ENCODE measurements at regions of chr7 and their contacts with region 1.

Region 1: GRCh38 chr7:2451171-2452073 is 24.8 kb downstream of the GRIFIN start:
- DNase-seq: peak; percentile 12
- ATAC-seq: peak; percentile 98
- H3K4me3 ChIP-seq: peak overlapping the region; percentile 6 to 51
- H3K27ac ChIP-seq: peak overlapping the region; percentile 60
- H3K4me1 ChIP-seq: peaks cover 18% of the 10 kb centered on the region
- H3K27me3 ChIP-seq: no peaks in the 10 kb centered on the region
- CTCF ChIP-seq: peak; percentile 99

Region 2: GRCh38 chr7:2354186-2354938 is 97.1 kb before region 1 on chr7 and contains the start of gene EIF3B:
- CTCF ChIA-PET with region 1: no interaction called
- POLR2A ChIA-PET with region 1: interaction called, 12 read pairs
- in situ Hi-C with region 1: no loop called
- intact Hi-C with region 1: no loop called
- DNase-seq: peak; percentile 94
- ATAC-seq: peak; percentile 92
- H3K4me3 ChIP-seq: peak within 1 kb of the TSS; percentile 64 to 98
- H3K27ac ChIP-seq: peak within 1 kb of the TSS; percentile 99
- H3K4me1 ChIP-seq: peaks cover 13% of the 10 kb centered on the region
- H3K27me3 ChIP-seq: no peaks in the 10 kb centered on the region
- CTCF ChIP-seq: no peak
- total RNA-seq, gene EIF3B: 432 TPM

Region 3: DNA sequence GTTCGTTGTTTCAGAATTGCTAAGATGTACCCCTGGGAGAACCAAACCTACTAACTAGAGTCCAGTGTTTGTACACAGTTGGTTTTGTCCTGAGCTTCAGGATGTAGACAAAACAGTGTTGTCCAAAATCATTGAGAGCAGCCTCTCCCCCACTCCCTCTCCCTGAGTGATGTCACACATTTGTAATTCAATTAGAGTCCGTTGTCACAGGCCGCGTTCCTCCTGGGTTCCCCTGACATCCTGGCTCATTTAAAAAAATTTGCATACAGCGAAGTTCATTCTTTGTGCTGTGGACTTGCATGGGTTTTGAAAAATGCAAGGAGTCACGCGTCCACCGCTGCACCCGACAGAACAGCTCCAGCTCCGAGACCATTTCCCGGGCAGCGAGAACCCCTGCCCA is 14.5 kb after region 1 on chr7:
- CTCF ChIA-PET with region 1: interaction called, 52 read pairs
- POLR2A ChIA-PET with region 1: interaction called, 17 read pairs
- in situ Hi-C with region 1: no loop called
- intact Hi-C with region 1: no loop called
- DNase-seq: no peak
- ATAC-seq: no peak
- H3K4me3 ChIP-seq: no peak overlapping the region
- H3K27ac ChIP-seq: no peak overlapping the region
- H3K4me1 ChIP-seq: no peaks in the 10 kb centered on the region; the same call in 1 of the 2 replicates
- H3K27me3 ChIP-seq: no peaks in the 10 kb centered on the region
- CTCF ChIP-seq: no peak

Region 4: DNA sequence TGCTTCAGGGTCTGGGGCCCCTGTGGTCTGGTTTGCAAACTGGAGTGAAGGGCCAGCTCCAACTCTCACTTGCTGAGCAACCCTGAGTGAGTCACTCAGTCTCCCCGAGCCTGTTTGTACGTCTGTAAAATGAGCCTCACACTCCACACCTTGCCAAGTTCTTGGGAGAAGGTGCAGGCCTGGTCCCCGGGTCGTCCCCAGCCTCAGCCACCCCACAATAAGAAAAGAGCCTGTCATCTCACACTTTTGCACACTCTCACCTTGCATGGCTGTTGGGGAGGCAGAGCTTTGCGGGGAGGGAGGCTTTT is 19.6 kb after region 1 on chr7:
- CTCF ChIA-PET with region 1: interaction called, 52 read pairs
- POLR2A ChIA-PET with region 1: interaction called, 4 read pairs
- in situ Hi-C with region 1: no loop called
- intact Hi-C with region 1: no loop called
- DNase-seq: no peak
- ATAC-seq: peak; percentile 57
- H3K4me3 ChIP-seq: no peak overlapping the region
- H3K27ac ChIP-seq: no peak overlapping the region
- H3K4me1 ChIP-seq: peaks cover 7% of the 10 kb centered on the region; the same call in 1 of the 2 replicates
- H3K27me3 ChIP-seq: no peaks in the 10 kb centered on the region
- CTCF ChIP-seq: no peak

Region 5: DNA sequence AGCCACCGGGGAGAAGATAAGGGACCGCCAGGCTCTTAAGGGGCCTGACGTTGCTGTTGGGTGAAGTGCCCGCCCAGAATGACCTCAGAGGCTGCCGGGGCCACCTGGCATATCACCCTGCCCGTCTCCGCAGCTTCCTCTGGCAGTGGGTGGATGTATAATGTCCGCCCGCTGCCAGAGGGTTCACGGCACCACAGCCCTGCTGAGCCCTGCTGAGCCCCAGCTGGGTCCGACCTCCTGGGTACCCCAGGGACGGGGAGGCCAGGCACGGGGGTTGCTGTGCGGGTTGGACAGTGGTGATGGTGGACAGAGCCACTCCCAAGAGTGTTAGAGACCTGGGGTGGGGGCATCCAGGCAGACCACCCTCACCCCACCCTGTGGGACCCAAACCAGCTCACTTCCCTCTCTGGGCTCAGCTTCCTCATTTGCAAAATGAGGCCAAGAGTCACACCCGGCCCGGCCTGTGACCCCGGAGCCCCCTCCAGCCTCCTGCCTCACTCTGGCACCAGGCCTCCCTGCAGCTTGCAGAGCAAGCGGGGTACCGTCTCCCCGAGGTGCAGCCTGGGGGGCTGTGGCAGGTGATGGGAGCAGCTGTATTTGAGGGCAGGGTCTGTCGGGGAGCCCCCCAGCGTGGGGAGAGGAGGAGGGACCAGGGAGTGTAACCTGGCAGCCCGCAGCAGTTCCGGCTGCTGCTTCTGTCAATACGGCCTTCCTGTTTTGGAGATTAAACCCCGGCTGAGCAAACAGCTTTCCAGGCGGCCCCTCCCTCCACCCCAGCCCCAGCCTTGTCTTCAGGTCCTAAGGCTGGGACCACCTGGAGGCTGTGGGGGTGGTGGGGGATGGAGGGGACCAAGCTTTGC is 59.7 kb after region 1 on chr7:
- CTCF ChIA-PET with region 1: no interaction called
- POLR2A ChIA-PET with region 1: interaction called, 11 read pairs
- in situ Hi-C with region 1: no loop called
- intact Hi-C with region 1: no loop called
- DNase-seq: no peak
- ATAC-seq: peak; percentile 36
- H3K4me3 ChIP-seq: no peak overlapping the region
- H3K27ac ChIP-seq: peak overlapping the region; percentile 62
- H3K4me1 ChIP-seq: peaks cover 39% of the 10 kb centered on the region
- H3K27me3 ChIP-seq: no peaks in the 10 kb centered on the region
- CTCF ChIP-seq: no peak

Region 6: DNA sequence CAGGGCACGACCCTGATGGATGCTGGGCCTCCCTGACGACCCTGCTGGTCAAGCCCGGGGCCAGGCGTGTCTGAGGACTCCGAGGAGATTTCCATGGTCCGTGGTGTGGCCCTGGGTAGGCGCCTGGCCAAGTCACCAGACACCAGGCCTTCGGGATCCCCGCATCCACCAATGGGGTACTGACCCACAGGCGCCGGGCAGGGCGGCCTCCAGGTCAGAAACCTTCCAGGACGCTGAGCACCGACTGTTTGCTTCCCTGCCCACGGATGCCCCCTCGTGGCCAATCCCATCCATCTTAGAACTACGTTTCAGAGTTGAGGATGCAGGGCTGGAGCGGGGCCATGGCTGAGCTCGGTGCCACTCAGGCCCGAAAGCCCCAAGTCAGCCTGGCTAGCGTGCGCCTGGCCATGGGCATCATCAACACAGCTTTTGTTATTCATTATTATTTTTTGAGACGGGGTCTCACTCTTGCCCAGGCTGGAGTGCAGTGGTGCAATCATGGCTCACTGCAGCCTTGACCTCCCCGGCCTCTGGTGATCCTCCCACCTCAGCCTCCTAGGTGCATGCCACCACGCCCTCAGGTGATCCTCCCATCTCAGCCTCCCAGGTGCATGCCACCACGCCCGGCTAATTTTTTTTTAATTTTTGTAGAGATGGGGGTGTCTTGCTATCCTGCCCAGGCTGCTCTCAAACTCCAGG is 229.5 kb after region 1 on chr7:
- CTCF ChIA-PET with region 1: interaction called, 6 read pairs
- POLR2A ChIA-PET with region 1: no interaction called
- in situ Hi-C with region 1: no loop called
- intact Hi-C with region 1: loop called (anchors 10 kb)
- DNase-seq: peak; percentile 27
- ATAC-seq: peak; percentile 89
- H3K4me3 ChIP-seq: no peak overlapping the region
- H3K27ac ChIP-seq: no peak overlapping the region
- H3K4me1 ChIP-seq: no peaks in the 10 kb centered on the region; the same call in 1 of the 2 replicates
- H3K27me3 ChIP-seq: no peaks in the 10 kb centered on the region
- CTCF ChIP-seq: peak; percentile 96

Measured in Panc1 (cell line).